Activated CD4-positive, alpha-beta T cell treated with anti-CD3 and anti-CD28 coated beads, Interleukin-2, amount 10 ng/mL, durations not matched to agents 24 days and 14 days (primary cell): ENCODE measurements at regions of chr4 and their contacts with region 1.

Region 1: DNA sequence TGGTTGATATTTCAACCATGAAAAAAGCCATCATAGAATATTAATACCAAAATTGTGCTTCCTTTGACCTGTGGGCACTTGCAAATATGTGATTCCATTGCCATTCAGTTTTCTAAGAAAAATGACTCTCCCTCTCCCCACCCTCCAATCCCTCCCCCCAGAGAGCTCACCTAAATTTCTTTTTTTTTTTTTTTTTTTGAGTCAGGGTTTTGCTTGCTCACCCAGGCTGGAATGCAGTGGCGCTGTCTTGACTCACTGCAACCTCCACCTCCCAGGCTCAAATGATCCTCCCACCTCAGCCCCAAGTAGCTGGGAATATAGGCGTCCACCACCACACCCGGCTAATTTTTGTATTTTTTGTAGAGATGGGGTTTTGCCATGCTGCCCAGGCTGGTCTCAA is 47.0 kb downstream of the SNX25 start:
- DNase-seq: no peak
- H3K4me3 Mint-ChIP-seq: no peak overlapping the region
- H3K27ac Mint-ChIP-seq: no peak overlapping the region
- H3K4me1 Mint-ChIP-seq: peaks cover 33% of the 10 kb centered on the region
- H3K27me3 Mint-ChIP-seq: no peaks in the 10 kb centered on the region

Region 2: DNA sequence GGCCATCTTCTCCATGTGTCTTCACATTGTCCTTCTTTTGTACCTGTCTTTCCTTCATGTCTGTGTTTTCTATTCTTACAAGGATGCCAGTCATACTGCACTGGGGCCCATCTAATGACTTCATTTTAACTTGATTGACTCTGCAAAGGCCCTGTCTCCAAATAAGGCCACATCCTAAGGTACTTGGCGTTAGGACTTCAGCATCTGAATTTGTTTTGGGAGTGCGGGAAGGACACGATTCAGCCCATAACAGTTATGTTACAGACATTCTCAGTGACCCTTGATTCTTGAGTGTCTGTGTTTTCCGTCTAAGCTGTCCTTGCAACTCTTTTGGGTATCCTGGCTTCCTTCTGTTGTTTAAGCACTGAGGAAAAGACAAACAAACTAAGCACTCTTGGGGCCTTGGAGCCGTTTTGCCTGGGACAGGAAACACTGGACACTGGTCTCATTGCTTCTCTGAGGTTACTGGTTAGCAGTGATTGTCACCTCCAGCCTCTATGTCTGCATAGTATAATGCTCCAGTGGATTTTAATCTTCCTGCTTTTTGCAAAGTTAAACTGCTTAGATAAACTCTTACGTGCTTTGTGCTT is 33.7 kb after region 1 on chr4:
- intact Hi-C with region 1: no loop called
- DNase-seq: no peak
- H3K4me3 Mint-ChIP-seq: no peak overlapping the region
- H3K27ac Mint-ChIP-seq: no peak overlapping the region
- H3K4me1 Mint-ChIP-seq: no peaks in the 10 kb centered on the region
- H3K27me3 Mint-ChIP-seq: no peaks in the 10 kb centered on the region

Region 3: GRCh38 chr4:185343726-185344581 is 87.5 kb after region 1 on chr4:
- intact Hi-C with region 1: loop called (anchors 5 kb)
- DNase-seq: no peak
- H3K4me3 Mint-ChIP-seq: peak overlapping the region; percentile 50
- H3K27ac Mint-ChIP-seq: peak overlapping the region; percentile 90
- H3K4me1 Mint-ChIP-seq: peaks cover 43% of the 10 kb centered on the region
- H3K27me3 Mint-ChIP-seq: no peaks in the 10 kb centered on the region

Region 4: GRCh38 chr4:185817403-185817818 is 561.0 kb after region 1 on chr4:
- intact Hi-C with region 1: no loop called
- DNase-seq: peak; percentile 37
- H3K4me3 Mint-ChIP-seq: no peak overlapping the region
- H3K27ac Mint-ChIP-seq: no peak overlapping the region
- H3K4me1 Mint-ChIP-seq: no peaks in the 10 kb centered on the region
- H3K27me3 Mint-ChIP-seq: no peaks in the 10 kb centered on the region